Colonic mucosa (tissue), 4 donors: ENCODE measurements at regions of chr3 and their contacts with region 1.

Region 1: DNA sequence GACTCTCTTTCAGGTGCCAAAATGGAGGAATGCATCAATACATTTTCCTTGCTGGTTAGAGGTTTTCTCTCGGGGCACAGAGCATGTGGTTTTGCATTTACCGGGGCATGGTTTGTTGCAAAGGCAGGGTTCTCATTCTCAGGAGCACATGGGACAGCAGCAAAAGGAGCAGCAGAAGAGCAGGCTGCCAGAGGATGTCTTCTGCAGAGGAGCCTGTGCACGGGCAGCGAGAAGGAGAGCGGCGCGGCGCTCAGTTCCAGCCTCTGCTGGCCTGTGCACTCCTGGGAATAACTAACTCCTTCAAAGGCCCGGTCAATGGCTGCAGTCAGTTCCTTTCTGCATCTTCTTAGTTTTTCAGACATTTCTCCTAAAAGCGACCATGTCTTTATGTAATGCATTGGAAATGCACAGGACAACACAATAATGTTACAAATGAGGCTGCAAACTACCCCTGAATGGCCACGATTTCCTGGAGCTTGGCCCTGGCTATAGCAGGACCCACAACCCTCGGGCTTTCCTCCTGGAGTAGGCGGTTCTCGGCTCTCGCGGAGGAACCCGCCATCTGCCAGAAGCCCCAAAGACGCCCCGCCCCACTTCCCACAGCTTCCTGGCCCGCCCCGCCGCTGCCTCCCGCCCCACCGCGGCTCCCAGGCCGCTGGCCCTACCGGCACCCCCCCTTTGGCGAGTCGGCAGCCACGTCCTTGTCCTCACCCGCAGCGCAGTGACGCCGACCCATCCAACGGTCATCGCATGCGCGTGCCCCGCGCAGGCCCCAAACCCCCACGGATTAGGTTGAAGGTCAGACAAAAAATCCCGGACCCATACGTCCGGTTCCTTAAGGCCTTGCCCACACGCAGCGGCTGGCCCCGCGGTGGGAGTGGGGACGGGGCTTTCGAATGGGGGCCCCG is at the start of gene C3orf62:
- DNase-seq: peak; percentile 93
- H3K4me3 ChIP-seq: peak within 1 kb of the TSS; percentile 44
- H3K27ac ChIP-seq: peak within 1 kb of the TSS; percentile 85
- H3K4me1 ChIP-seq: peaks cover 4% of the 10 kb centered on the region
- H3K27me3 ChIP-seq: no peaks in the 10 kb centered on the region
- CTCF ChIP-seq: no peak
- total RNA-seq, gene C3orf62: 3.1 to 4.2 TPM

Region 2: GRCh38 chr3:49028673-49029562 is 247.8 kb before region 1 on chr3 and contains the start of gene IMPDH2:
- intact Hi-C with region 1: no loop called
- DNase-seq: peak; percentile 94
- H3K4me3 ChIP-seq: peak within 1 kb of the TSS; percentile 66
- H3K27ac ChIP-seq: peak within 1 kb of the TSS; percentile 77
- H3K4me1 ChIP-seq: peaks cover 7% of the 10 kb centered on the region
- H3K27me3 ChIP-seq: no peaks in the 10 kb centered on the region
- CTCF ChIP-seq: no peak
- total RNA-seq, gene IMPDH2: 126 to 249 TPM

Region 3: DNA sequence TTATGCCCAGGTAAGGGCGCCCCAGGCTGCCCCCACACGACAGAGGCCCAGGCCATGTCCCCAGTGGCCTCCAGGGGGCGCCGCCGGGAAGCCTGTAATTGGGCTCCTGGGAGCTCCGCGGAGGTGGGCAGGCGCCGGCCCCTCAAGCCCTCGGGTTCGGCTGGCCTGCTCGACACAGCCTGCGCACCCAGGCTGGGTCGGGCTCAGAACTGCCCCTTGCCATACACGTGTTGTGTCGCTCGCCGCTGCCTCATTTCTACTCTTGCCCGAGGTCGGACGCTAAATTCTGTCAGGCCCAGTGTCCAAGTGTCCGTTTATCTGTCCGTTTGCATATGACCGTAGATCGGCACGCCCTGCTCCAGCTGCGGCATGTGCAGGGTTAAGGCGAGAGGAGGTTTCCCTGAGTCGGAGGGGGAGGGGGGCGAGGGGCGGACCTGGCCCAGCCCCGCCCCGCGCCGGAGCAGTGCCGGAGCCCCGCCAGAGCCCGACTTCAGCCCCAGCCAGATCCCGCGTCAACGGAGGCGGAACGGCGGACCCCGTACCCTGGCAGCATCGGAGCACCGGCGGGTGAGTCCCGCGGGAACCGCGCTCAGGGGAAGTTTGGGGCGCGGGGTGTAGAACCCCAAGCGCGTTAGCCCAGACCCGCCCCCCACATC is 105.5 kb before region 1 on chr3 and contains the start of gene KLHDC8B:
- intact Hi-C with region 1: loop called (anchors 5 kb)
- DNase-seq: peak; percentile 91
- H3K4me3 ChIP-seq: peak within 1 kb of the TSS; percentile 57
- H3K27ac ChIP-seq: peak within 1 kb of the TSS; percentile 53
- H3K4me1 ChIP-seq: no peaks in the 10 kb centered on the region
- H3K27me3 ChIP-seq: no peaks in the 10 kb centered on the region
- CTCF ChIP-seq: peak; percentile 96
- total RNA-seq, gene KLHDC8B: 5.1 to 9.4 TPM